HCT116 (cell line): ENCODE measurements at regions of chr7 and their contacts with region 1.

Region 1: GRCh38 chr7:23570592-23571200 is 26.5 kb upstream of the CCDC126 start:
- DNase-seq: peak; percentile 77
- ATAC-seq: peak; percentile 99
- H3K4me3 ChIP-seq: no peak overlapping the region
- H3K27ac ChIP-seq: no peak overlapping the region
- H3K4me1 ChIP-seq: peaks cover 0 to 4% of the 10 kb centered on the region in 2 experiments; a peak in 1 of 4 replicates
- H3K27me3 ChIP-seq: no peaks in the 10 kb centered on the region
- CTCF ChIP-seq: peak; percentile 86 to 91 (median 90)
- POLR2A ChIP-seq: no peak
- RAD21 ChIP-seq: peak; percentile 97

Region 2: GRCh38 chr7:23696916-23697441 is 126.3 kb after region 1 on chr7:
- CTCF ChIA-PET with region 1: interaction called, 14 read pairs
- POLR2A ChIA-PET with region 1: no interaction called
- RAD21 ChIA-PET with region 1: interaction called in 1 of 2 experiments, 3 read pairs
- intact Hi-C with region 1: no loop called
- DNase-seq: peak; percentile 76
- ATAC-seq: peak; percentile 98
- H3K4me3 ChIP-seq: no peak overlapping the region
- H3K27ac ChIP-seq: no peak overlapping the region
- H3K4me1 ChIP-seq: peaks cover 3 to 10% of the 10 kb centered on the region in 2 experiments; a peak in 3 of 4 replicates
- H3K27me3 ChIP-seq: no peaks in the 10 kb centered on the region
- CTCF ChIP-seq: peak; percentile 54 to 92 (median 81)
- POLR2A ChIP-seq: no peak
- RAD21 ChIP-seq: peak; percentile 69

Region 3: DNA sequence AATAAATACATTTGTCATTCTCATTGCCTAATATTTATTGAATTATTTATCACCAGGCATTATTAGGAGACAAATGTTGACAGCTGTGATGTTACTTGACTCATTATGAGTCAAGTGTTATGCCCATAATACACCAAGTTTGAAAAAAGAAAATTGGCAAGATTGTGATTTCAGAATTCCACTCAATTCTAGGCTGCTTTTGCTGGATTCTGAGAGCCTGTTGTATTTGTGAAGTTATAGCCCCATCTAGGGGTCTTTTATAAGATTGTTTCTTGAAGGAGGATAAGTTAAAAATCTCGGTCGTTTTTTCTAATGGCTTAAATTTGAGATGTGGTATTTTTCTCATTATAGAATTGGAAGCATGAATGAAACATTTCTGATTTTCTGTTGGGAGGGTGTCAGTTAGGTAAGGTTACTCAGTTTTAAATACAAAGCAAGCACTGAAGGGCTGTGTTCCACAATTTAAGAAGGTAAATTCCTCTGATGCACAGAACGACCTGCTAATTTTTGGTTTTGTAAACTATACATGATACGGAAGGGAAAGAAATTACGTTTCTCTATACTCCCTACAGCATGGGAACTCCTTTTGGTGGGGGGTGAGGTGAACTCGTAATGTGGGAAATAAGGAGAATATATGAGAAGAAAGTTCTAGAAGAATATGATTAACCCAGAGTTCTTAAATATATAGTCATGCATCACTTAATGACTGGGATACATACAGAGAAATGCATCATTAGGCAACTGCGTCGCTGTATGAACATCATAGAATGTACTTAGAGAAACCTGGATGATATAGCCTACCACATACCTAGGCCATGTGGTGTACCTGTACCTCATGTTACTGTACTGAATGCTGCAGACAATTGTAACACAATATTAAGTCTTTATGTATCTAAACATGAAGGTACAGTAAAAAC is 141.9 kb after region 1 on chr7:
- CTCF ChIA-PET with region 1: interaction called, 49 read pairs
- POLR2A ChIA-PET with region 1: no interaction called
- RAD21 ChIA-PET with region 1: interaction called, 3 to 5 read pairs
- intact Hi-C with region 1: loop called (anchors 1 kb)
- DNase-seq: peak; percentile 67
- ATAC-seq: peak; percentile 64
- H3K4me3 ChIP-seq: no peak overlapping the region
- H3K27ac ChIP-seq: no peak overlapping the region
- H3K4me1 ChIP-seq: peaks cover 0 to 17% of the 10 kb centered on the region in 2 experiments; a peak in 2 of 4 replicates
- H3K27me3 ChIP-seq: no peaks in the 10 kb centered on the region
- CTCF ChIP-seq: peak; percentile 18 to 96 (median 70); a peak in 5 of 6 replicates
- POLR2A ChIP-seq: no peak
- RAD21 ChIP-seq: peak; percentile 92

Region 4: GRCh38 chr7:23938937-23939552 is 368.3 kb after region 1 on chr7:
- CTCF ChIA-PET with region 1: interaction called, 3 read pairs
- POLR2A ChIA-PET with region 1: no interaction called
- RAD21 ChIA-PET with region 1: no interaction called
- intact Hi-C with region 1: loop called (anchors 2 kb)
- DNase-seq: peak; percentile 47
- ATAC-seq: peak; percentile 100
- H3K4me3 ChIP-seq: no peak overlapping the region
- H3K27ac ChIP-seq: no peak overlapping the region
- H3K4me1 ChIP-seq: peaks cover 3 to 6% of the 10 kb centered on the region in 2 experiments; a peak in 2 of 4 replicates
- H3K27me3 ChIP-seq: no peaks in the 10 kb centered on the region
- CTCF ChIP-seq: peak; percentile 40 to 69 (median 68); a peak in 5 of 6 replicates
- POLR2A ChIP-seq: no peak
- RAD21 ChIP-seq: peak; percentile 74

Region 5: GRCh38 chr7:24381894-24382505 is 811.3 kb after region 1 on chr7:
- CTCF ChIA-PET with region 1: no interaction called
- POLR2A ChIA-PET with region 1: no interaction called
- RAD21 ChIA-PET with region 1: no interaction called
- intact Hi-C with region 1: loop called (anchors 5 kb)
- DNase-seq: peak; percentile 10
- ATAC-seq: peak; percentile 82
- H3K4me3 ChIP-seq: no peak overlapping the region
- H3K27ac ChIP-seq: no peak overlapping the region
- H3K4me1 ChIP-seq: peaks cover 6 to 10% of the 10 kb centered on the region in 2 experiments; a peak in 3 of 4 replicates
- H3K27me3 ChIP-seq: no peaks in the 10 kb centered on the region
- CTCF ChIP-seq: peak; percentile 49 to 69 (median 67); a peak in 5 of 6 replicates
- POLR2A ChIP-seq: no peak
- RAD21 ChIP-seq: peak; percentile 72

Region 6: GRCh38 chr7:24587848-24588247 is 1017.2 kb after region 1 on chr7:
- CTCF ChIA-PET with region 1: no interaction called
- POLR2A ChIA-PET with region 1: no interaction called
- RAD21 ChIA-PET with region 1: no interaction called
- intact Hi-C with region 1: loop called (anchors 5 kb)
- DNase-seq: no peak
- ATAC-seq: peak; percentile 85
- H3K4me3 ChIP-seq: no peak overlapping the region
- H3K27ac ChIP-seq: no peak overlapping the region
- H3K4me1 ChIP-seq: no peaks in the 10 kb centered on the region
- H3K27me3 ChIP-seq: no peaks in the 10 kb centered on the region
- CTCF ChIP-seq: peak; percentile 60 to 79 (median 62)
- POLR2A ChIP-seq: no peak
- RAD21 ChIP-seq: peak; percentile 72

Region 7: DNA sequence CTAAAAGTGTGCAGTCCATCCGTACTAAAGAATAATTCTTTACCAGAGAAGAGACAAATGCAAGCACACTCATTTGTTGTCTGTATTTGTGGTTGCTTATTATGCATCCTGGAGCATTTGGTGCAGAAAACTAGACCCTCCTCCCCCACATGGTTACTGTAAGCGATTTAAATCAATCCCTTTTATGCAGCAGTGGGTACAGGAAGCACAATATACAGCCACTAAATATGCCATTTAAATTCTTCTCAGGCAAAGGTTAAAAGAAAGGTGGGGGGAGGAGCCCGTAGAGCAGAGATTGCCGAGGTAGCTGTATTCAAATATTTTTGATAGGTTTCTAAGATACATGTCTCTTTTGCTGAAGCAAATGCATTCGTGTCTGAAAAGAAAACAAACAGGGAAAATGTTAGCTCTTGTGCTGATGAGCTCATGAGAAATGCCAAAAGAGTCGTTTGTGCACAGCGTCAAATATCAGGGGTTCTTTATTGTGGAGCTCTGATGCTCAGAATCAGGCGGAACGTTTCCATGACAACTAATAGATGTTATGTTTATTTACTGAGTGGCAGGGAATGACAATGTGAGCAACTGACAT is 1788.9 kb after region 1 on chr7:
- CTCF ChIA-PET with region 1: no interaction called
- POLR2A ChIA-PET with region 1: no interaction called
- RAD21 ChIA-PET with region 1: no interaction called
- intact Hi-C with region 1: no loop called
- DNase-seq: no peak
- ATAC-seq: no peak
- H3K4me3 ChIP-seq: no peak overlapping the region
- H3K27ac ChIP-seq: no peak overlapping the region
- H3K4me1 ChIP-seq: no peaks in the 10 kb centered on the region
- H3K27me3 ChIP-seq: peaks cover 14% of the 10 kb centered on the region; the same call in 1 of the 2 replicates
- CTCF ChIP-seq: no peak
- POLR2A ChIP-seq: no peak
- RAD21 ChIP-seq: no peak